ENCODE measurements at regions of chr9 and their contacts with region 1.

Region 1: GRCh38 chr9:124006448-124007118 is 5.0 kb upstream of the LHX2 start:
- DNase-seq: peak; percentile 42
- ATAC-seq: no peak
- H3K4me3 Mint-ChIP-seq: no peak overlapping the region
- H3K27ac Mint-ChIP-seq: no peak overlapping the region
- H3K4me1 Mint-ChIP-seq: peaks cover 24% of the 10 kb centered on the region
- H3K27me3 Mint-ChIP-seq: peaks cover 85% of the 10 kb centered on the region

Region 2: DNA sequence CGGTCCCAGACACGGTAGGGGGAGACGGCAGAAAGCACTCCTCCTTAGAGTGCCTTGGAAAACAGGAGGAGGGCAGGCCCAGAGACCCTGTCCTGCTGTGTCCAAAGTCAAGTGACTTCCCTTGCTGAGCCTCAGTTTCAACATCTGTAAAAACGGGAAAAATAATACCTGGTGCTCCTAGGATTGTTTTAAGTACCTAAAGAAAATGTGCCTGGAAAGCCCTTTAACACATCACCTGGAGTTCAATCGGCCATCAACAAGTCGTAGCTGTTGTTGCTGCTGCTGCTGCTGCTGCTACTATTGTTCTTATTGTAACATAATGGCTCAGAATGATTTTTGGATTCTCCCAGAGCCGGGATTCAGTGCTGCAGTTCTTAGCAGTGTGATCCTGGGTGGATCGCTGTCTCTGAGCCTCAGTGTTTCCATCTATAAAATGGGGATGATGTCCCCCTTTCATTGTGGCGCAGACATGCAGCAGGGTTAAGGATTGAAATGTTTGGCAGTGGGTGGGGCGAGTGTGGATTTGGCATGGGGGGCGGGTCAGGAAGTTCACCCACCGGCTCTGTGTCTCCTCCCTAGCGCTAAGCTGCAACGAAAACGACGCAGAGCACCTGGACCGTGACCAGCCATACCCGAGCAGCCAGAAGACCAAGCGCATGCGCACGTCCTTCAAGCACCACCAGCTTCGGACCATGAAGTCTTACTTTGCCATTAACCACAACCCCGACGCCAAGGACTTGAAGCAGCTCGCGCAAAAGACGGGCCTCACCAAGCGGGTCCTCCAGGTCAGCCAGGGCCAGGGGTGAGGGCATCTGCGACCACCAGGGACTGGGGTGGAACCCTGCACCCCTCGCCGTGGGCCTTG is 14.2 kb after region 1 on chr9:
- CTCF ChIA-PET with region 1: no interaction called
- POLR2A ChIA-PET with region 1: no interaction called
- intact Hi-C with region 1: loop called (anchors 1 kb)
- DNase-seq: no peak
- ATAC-seq: no peak
- H3K4me3 Mint-ChIP-seq: no peak overlapping the region
- H3K27ac Mint-ChIP-seq: no peak overlapping the region
- H3K4me1 Mint-ChIP-seq: peaks cover 18% of the 10 kb centered on the region
- H3K27me3 Mint-ChIP-seq: peaks cover 75% of the 10 kb centered on the region